ENCODE measurements at regions of chr16 and their contacts with region 1.

Region 1: DNA sequence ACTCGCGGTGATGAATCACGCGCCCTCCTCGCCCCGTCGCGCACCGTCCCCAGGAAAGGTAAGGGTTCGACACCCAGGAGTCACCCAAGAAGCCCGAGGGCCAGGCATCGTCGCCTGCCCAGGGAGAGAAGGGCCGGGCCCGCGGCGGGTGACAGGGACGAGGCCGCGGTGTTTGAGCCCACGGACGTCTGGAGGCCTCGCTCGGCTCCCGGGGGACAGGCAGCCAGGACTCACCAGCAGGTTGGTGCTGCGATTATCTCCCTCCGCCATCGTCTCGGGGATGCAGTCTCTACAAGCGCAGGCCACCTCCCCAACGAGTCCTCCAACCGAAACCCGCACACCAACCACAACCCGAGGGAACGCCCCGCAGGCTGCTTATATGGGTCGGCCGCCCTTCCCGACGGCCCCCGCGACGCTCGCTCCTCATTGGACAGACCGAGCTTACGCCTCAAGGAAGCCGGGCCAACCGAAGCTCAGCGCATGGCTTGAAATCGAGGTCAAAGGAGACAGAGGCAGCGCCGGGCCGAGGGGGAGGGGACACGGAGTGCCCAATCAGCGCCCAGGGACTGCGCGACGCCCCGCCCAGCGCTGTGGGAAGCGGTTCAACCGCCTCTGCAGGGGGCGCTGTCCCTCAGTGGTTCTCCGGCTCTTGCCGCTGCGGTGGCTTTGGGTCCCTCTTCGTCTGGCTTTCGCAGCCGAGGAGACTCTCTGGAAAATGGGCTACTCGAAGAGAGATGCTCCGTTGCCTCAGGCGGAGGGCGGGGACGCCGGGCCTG is at the start of gene ARL6IP1:
- DNase-seq: peak; percentile 100
- ATAC-seq: peak; percentile 100
- total RNA-seq, gene ARL6IP1: 27.2 TPM

Region 2: GRCh38 chr16:18789850-18790724 is 11.3 kb before region 1 on chr16 and contains the start of gene RPS15A:
- intact Hi-C with region 1: loop called (anchors 1 kb)
- DNase-seq: peak; percentile 94
- ATAC-seq: peak; percentile 100
- total RNA-seq, gene RPS15A: 750 TPM

Region 3: GRCh38 chr16:18932243-18932981 is 131.0 kb after region 1 on chr16:
- intact Hi-C with region 1: no loop called
- DNase-seq: no peak
- ATAC-seq: peak; percentile 64

Region 4: GRCh38 chr16:18969050-18969854 is 167.9 kb after region 1 on chr16:
- intact Hi-C with region 1: loop called (anchors 5 kb)
- DNase-seq: peak; percentile 94
- ATAC-seq: peak; percentile 92

Region 5: DNA sequence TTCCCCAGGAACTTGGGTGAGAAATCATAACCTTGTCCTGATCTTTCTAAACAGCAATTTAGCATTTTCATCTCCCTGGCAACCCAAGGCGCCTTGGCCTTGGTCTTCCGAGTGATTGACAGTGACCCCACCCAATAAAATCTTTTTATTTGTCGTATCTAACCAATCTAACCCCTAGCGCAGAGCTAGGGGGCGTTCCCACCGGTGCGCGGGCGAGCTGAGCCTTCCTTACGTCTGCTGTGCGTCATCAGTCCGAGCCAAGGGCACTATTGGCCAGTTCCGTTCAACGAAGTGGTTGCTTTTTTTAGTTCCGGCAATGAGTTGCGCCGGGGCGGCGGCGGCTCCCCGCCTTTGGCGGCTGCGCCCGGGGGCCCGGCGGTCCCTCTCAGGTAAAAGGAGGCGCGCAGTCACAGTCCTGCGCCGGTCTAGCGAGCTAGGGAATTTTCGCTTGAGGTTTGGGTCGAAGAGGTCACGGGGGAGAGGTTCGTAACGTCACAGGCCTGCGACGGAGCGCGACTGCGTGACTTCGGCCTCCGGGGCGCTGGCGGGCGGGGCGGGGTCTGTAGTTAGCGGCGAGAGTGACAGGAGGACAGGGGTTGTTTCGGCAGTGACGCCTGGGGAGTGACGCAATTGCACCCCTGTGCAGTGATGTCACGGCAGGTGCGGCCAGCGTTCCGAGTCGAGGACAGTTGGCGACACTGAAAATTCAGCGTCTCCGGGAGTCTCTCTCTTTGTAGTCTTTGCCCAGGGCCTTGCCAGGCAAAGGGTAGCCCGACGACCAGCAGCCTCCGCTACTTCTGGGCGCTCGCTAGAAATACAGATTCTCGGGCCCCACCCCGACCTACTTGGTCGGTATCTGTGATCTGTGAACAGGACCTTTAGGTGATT is 266.2 kb after region 1 on chr16 and contains the start of gene COQ7:
- intact Hi-C with region 1: loop called (anchors 10 kb)
- DNase-seq: peak; percentile 99
- ATAC-seq: peak; percentile 98
- total RNA-seq, gene COQ7: 40.4 TPM

Region 6: DNA sequence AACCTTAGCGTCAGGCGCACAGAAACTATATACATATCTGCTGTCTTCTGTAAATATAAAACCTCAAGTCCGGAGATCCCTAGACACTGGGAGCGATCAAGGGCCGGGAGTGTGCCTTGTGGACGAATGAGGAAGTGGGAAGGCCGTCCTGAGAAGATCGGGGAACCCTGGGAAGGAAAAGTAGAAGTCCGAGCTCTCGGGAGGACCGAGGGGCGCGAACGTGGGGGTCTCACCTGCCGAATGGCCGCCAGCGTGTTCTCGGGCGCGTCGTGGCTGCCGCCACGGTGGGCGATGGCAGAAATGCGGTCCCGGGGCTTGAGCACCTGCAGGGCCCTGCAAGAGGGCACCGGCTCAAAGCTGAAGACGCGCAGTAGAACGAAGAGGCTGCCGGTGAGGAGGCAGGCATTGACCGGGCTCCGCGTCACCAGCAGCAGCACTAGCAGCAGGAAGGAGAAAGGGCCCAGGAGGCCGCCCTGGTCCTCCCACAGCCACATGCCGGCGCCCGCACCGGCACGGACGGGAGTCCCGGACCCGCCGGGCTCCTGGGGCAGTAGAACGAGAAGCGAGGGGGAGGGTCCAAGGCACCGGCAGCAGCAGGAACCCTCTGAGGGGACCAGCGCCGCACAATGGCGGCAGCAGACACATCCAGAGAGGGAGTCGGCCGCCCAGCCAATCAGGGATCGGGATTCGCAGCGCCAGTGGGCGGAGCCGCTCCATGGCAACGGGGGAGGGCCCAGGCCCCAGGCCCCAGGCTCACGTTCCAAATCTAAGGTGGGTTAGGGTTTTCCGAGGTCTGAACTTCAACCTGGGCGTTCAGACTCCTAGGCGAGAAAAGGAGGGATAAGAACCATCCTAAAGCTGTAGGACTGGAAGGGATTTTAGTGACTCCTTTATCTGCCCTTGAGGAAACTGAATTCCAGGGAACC is 720.3 kb after region 1 on chr16 and contains the start of gene GDE1:
- intact Hi-C with region 1: loop called (anchors 10 kb)
- DNase-seq: peak; percentile 98
- ATAC-seq: peak; percentile 91
- total RNA-seq, gene GDE1: 110 TPM

Measured in Right ventricle myocardium inferior (tissue), 1 donor.